HepG2 (cell line): ENCODE measurements at regions of chr16 and their contacts with region 1.

Region 1: DNA sequence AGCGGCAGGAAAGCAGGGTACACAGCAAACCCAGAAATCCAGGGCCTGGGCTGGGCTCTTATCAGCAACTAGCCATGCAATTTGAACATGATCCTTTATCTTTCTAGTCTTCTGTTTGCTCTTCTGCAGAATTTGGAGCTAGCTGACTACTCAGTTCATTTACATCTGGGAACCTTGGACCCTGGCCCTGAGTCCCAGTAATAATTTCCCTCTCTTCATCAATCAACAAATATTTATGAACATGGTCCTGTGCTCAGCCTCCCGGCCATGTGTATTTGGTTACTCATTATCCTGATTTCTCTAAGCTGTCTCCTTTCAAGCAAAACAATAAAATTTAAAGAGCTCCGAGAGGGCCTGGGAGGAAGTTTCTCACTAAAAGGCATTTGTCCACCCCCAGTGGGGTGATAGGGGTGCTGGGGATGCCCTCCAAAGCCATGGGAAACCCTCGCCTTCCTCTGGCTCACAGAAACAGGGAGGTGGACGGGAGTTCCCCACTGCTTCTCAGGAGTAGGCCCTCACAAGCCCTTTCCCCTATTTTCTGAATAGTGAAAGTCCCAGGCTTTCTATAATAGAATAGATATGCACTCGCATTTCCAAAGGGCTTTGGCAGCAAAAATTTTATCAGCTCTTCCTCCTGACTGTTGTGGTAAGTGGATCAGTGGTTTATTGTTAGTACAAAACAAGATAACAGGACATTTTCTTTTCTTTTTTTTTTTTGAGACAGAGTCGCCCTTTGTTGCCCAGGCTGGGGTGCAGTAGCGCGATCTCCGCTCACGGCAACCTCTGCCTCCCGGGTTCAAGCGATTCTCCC is 6.9 kb upstream of the WDR59 start:
- DNase-seq: peak; percentile 100
- ATAC-seq: peak; percentile 93
- H3K4me3 ChIP-seq: peak overlapping the region; percentile 53 to 66 (median 61)
- H3K27ac ChIP-seq: peak overlapping the region; percentile 98
- H3K4me1 ChIP-seq: peaks cover 98% of the 10 kb centered on the region
- H3K27me3 ChIP-seq: no peaks in the 10 kb centered on the region
- CTCF ChIP-seq: no peak
- EP300 ChIP-seq: peak; percentile 54 to 97; a peak in 3 of 4 replicates
- POLR2A ChIP-seq: peak; percentile 46 to 50; a peak in 3 of 4 replicates
- RAD21 ChIP-seq: 0 out of 2 replicates have a peak, but pooled peaks have one; percentile 19

Region 2: GRCh38 chr16:74709441-74709877 is 282.3 kb before region 1 on chr16:
- CTCF ChIA-PET with region 1: no interaction called
- POLR2A ChIA-PET with region 1: no interaction called
- in situ Hi-C with region 1: no loop called
- intact Hi-C with region 1: no loop called
- DNase-seq: peak; percentile 78
- ATAC-seq: peak; percentile 92
- H3K4me3 ChIP-seq: no peak overlapping the region
- H3K27ac ChIP-seq: no peak overlapping the region
- H3K4me1 ChIP-seq: peaks cover 8% of the 10 kb centered on the region
- H3K27me3 ChIP-seq: peaks cover 6 to 26% of the 10 kb centered on the region in 2 experiments; a peak in 3 of 5 replicates
- CTCF ChIP-seq: peak; percentile 96
- EP300 ChIP-seq: no peak
- POLR2A ChIP-seq: no peak
- RAD21 ChIP-seq: peak; percentile 90

Region 3: GRCh38 chr16:74785031-74785430 is 206.8 kb before region 1 on chr16:
- CTCF ChIA-PET with region 1: no interaction called
- POLR2A ChIA-PET with region 1: no interaction called
- in situ Hi-C with region 1: no loop called
- intact Hi-C with region 1: no loop called
- DNase-seq: no peak
- ATAC-seq: no peak
- H3K4me3 ChIP-seq: no peak overlapping the region
- H3K27ac ChIP-seq: no peak overlapping the region
- H3K4me1 ChIP-seq: no peaks in the 10 kb centered on the region
- H3K27me3 ChIP-seq: no peaks in the 10 kb centered on the region
- CTCF ChIP-seq: no peak
- EP300 ChIP-seq: no peak
- POLR2A ChIP-seq: no peak
- RAD21 ChIP-seq: no peak

Region 4: GRCh38 chr16:75070012-75070941 is 78.5 kb after region 1 on chr16:
- CTCF ChIA-PET with region 1: no interaction called
- POLR2A ChIA-PET with region 1: interaction called, 7 read pairs
- in situ Hi-C with region 1: no loop called
- intact Hi-C with region 1: loop called (anchors 2 kb)
- DNase-seq: peak; percentile 98
- ATAC-seq: peak; percentile 92
- H3K4me3 ChIP-seq: peak overlapping the region in 2 of 3 experiments; percentile 41 to 50; a peak in 3 of 6 replicates
- H3K27ac ChIP-seq: peak overlapping the region; percentile 79
- H3K4me1 ChIP-seq: peaks cover 75% of the 10 kb centered on the region
- H3K27me3 ChIP-seq: no peaks in the 10 kb centered on the region
- CTCF ChIP-seq: no peak
- EP300 ChIP-seq: peak; percentile 77 to 79; a peak in 3 of 4 replicates
- POLR2A ChIP-seq: no peak; a peak in 1 of 4 replicates
- RAD21 ChIP-seq: no peak

Region 5: GRCh38 chr16:75116081-75116910 is 124.5 kb after region 1 on chr16 and contains the start of gene LDHD:
- CTCF ChIA-PET with region 1: interaction called, 3 read pairs
- POLR2A ChIA-PET with region 1: interaction called, 30 read pairs
- in situ Hi-C with region 1: no loop called
- intact Hi-C with region 1: no loop called
- DNase-seq: peak; percentile 86
- ATAC-seq: peak; percentile 93
- H3K4me3 ChIP-seq: peak within 1 kb of the TSS; percentile 56 to 83 (median 59)
- H3K27ac ChIP-seq: peak within 1 kb of the TSS; percentile 48
- H3K4me1 ChIP-seq: peaks cover 78% of the 10 kb centered on the region
- H3K27me3 ChIP-seq: no peaks in the 10 kb centered on the region; a peak in 1 of 5 replicates
- CTCF ChIP-seq: peak; percentile 49; the same call in 1 of the 2 replicates
- EP300 ChIP-seq: peak; percentile 51 to 52; a peak in 2 of 4 replicates
- POLR2A ChIP-seq: peak; percentile 90 to 96
- RAD21 ChIP-seq: no peak; the same call in 1 of the 2 replicates
- total RNA-seq, gene LDHD: 9.1 and 9.3 TPM in 2 replicates